AG04450 (cell line): ENCODE measurements at regions of chr11 and their contacts with region 1.

Region 1: DNA sequence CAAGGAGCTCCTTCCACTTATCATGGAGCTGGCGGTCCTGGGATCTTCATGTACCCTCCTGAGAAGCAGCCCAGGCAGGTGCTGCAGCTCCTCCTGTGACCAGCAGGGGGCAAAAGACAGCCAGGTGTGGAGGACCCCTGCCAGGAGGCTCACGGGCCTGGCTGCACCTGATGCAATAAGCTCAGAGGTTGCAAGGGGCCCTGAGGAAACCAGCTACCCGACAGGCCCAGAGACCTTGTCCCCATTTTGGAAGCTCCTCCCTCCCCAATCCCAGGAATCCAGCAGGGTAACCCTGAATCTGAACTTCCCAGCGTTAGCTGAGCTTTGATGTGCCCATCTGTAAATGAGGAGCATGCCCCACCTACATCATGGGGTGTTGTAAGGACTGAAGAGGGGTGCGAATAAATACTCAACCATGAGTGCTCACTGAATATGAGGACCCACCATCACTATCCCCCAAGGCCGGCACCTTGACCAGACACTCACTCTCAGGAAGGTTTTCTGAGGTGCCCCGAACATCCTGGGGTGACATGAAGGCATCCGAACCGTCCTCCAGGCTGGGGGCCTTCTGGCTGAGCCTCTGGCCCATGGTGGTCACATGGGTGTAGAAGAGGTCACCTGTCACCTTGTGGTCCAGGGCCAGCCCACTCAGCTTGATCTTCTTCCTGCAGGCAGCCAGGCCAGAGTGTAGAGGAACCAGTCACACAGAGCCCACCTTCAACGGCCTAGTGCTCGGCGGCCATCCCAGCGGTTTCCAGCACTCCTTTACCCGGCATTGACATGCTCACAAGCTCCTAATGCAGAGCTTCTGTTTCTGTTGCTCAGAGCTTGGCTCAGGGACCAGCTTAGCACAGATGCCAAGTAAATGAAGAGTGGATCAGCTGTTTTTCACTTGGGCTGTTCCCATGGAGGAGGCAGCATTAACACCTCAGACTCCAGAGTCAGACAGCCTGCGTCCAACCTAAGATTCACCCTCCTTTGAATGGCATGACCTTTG is 21.7 kb downstream of the SLC43A1 start:
- DNase-seq: no peak
- H3K4me3 ChIP-seq: no peak overlapping the region
- H3K27ac ChIP-seq: peak overlapping the region; percentile 31
- H3K27me3 ChIP-seq: no peaks in the 10 kb centered on the region
- CTCF ChIP-seq: peak; percentile 87

Region 2: GRCh38 chr11:57124917-57125316 is 368.9 kb before region 1 on chr11:
- CTCF ChIA-PET with region 1: no interaction called
- POLR2A ChIA-PET with region 1: no interaction called
- DNase-seq: no peak
- H3K4me3 ChIP-seq: no peak overlapping the region
- H3K27ac ChIP-seq: no peak overlapping the region
- H3K27me3 ChIP-seq: peaks cover 2% of the 10 kb centered on the region
- CTCF ChIP-seq: no peak

Region 3: DNA sequence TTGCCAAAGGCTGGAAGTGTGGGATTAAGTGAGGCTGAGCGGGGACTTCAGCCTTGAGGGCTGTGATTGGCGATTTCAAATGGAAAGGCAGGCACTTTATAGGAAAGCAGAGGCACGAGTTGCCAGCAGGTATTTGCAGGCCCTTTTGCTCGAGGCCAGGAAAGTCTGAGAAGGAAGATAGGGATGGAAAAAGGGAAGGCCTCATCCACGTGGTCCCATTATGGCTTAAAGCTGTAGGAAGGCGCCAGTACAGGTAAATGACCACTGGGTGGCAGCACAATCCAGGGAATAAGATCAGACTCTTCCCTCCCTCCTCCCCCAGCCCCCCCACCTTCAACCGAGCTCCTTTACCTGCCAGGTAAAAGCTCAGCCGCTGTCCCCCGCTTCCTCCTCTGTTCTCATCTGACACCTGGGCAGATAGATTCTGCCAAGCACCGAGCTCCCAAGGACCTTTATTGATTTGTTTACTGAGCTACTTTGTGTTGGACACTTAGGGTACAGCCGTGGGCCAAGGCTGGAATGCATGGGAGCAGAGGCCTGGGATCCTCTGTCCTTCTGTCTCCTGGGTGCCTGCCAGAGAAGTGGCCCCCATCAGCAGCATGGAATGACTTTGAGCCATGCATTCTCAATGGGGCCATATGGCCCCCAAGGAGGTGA is 148.1 kb before region 1 on chr11:
- CTCF ChIA-PET with region 1: interaction called, 13 read pairs
- POLR2A ChIA-PET with region 1: no interaction called
- DNase-seq: no peak
- H3K4me3 ChIP-seq: no peak overlapping the region
- H3K27ac ChIP-seq: no peak overlapping the region
- H3K27me3 ChIP-seq: peaks cover 7% of the 10 kb centered on the region
- CTCF ChIP-seq: peak; percentile 65

Region 4: GRCh38 chr11:57474017-57474802 is 19.6 kb before region 1 on chr11:
- CTCF ChIA-PET with region 1: interaction called, 15 read pairs
- POLR2A ChIA-PET with region 1: no interaction called
- DNase-seq: no peak
- H3K4me3 ChIP-seq: no peak overlapping the region
- H3K27ac ChIP-seq: no peak overlapping the region
- H3K27me3 ChIP-seq: peaks cover 16% of the 10 kb centered on the region
- CTCF ChIP-seq: no peak

Region 5: GRCh38 chr11:57480409-57481137 is 13.2 kb before region 1 on chr11:
- CTCF ChIA-PET with region 1: interaction called, 61 read pairs
- POLR2A ChIA-PET with region 1: no interaction called
- DNase-seq: no peak
- H3K4me3 ChIP-seq: no peak overlapping the region
- H3K27ac ChIP-seq: no peak overlapping the region
- H3K27me3 ChIP-seq: peaks cover 38% of the 10 kb centered on the region
- CTCF ChIP-seq: peak; percentile 75

Region 6: GRCh38 chr11:57508341-57509170 is 14.8 kb after region 1 on chr11:
- CTCF ChIA-PET with region 1: interaction called, 52 read pairs
- POLR2A ChIA-PET with region 1: interaction called, 3 read pairs
- DNase-seq: no peak
- H3K4me3 ChIP-seq: no peak overlapping the region
- H3K27ac ChIP-seq: no peak overlapping the region
- H3K27me3 ChIP-seq: no peaks in the 10 kb centered on the region
- CTCF ChIP-seq: no peak

Region 7: GRCh38 chr11:57515332-57516060 is 21.7 kb after region 1 on chr11 and contains the start of gene SLC43A1:
- CTCF ChIA-PET with region 1: interaction called, 52 read pairs
- POLR2A ChIA-PET with region 1: interaction called, 3 read pairs
- DNase-seq: no peak
- H3K4me3 ChIP-seq: peak within 1 kb of the TSS; percentile 85
- H3K27ac ChIP-seq: peak within 1 kb of the TSS; percentile 57
- H3K27me3 ChIP-seq: no peaks in the 10 kb centered on the region
- CTCF ChIP-seq: no peak
- polyA plus RNA-seq, gene SLC43A1: 14.6 and 17.5 TPM in 2 replicates

Region 8: DNA sequence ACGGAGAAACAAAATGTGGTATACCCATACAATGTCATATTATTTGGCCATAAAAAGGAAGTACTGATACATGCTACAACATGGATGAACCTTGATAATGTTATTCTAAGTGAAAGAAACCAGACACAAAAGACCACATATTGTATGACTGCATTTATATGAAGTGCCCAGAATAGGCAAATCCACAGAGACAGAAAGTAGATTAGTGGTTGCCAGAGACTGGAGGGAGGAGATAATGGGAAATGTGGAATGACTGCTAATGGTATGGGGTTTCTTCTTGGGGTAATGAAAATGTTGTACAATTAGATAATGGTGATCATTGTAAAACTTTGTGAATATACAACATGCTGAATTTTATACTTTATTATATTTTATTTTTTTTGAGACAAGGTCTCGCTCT is 27.3 kb after region 1 on chr11:
- CTCF ChIA-PET with region 1: interaction called, 121 read pairs
- POLR2A ChIA-PET with region 1: interaction called, 5 read pairs
- DNase-seq: no peak
- H3K4me3 ChIP-seq: no peak overlapping the region
- H3K27ac ChIP-seq: no peak overlapping the region
- H3K27me3 ChIP-seq: no peaks in the 10 kb centered on the region
- CTCF ChIP-seq: no peak

Region 9: DNA sequence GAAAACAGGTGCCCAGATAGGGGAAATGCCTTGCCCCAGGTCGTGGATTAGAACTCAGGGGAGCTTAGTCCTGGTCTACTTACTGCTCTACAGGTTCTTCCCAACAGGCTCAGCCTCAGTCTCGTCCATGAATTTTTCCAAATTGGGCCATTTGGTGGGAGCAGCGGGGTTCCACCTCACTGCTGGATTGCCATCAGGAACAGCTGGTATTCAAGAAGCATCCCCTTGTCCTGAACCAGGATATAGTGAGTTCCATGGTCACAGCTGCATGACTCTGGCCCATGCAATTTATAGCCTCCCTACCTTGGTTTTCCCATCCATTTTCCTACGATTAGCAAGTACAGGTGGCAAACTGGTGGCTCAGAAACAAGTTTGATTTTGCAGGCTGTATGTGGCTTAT is 80.3 kb after region 1 on chr11:
- CTCF ChIA-PET with region 1: no interaction called
- POLR2A ChIA-PET with region 1: no interaction called
- DNase-seq: no peak
- H3K4me3 ChIP-seq: no peak overlapping the region
- H3K27ac ChIP-seq: no peak overlapping the region
- H3K27me3 ChIP-seq: peaks cover 9% of the 10 kb centered on the region
- CTCF ChIP-seq: no peak

Region 10: GRCh38 chr11:57667736-57668435 is 174.1 kb after region 1 on chr11 and contains the start of gene ZDHHC5:
- CTCF ChIA-PET with region 1: no interaction called
- POLR2A ChIA-PET with region 1: no interaction called
- DNase-seq: peak; percentile 100
- H3K4me3 ChIP-seq: peak within 1 kb of the TSS; percentile 94
- H3K27ac ChIP-seq: peak within 1 kb of the TSS; percentile 92
- H3K27me3 ChIP-seq: no peaks in the 10 kb centered on the region
- CTCF ChIP-seq: peak; percentile 34
- polyA plus RNA-seq, gene ZDHHC5: 56.7 and 64.3 TPM in 2 replicates